Caco-2 (cell line): ENCODE measurements at regions of chr5 and their contacts with region 1.

Region 1: GRCh38 chr5:2751592-2752021 is at the start of gene IRX2:
- DNase-seq: peak; percentile 94 to 95
- H3K4me3 ChIP-seq: peak within 1 kb of the TSS; percentile 96
- H3K4me3 Mint-ChIP-seq: peak within 1 kb of the TSS; percentile 85
- H3K27ac Mint-ChIP-seq: peak within 1 kb of the TSS; percentile 89
- H3K4me1 ChIP-seq: peaks cover 16% of the 10 kb centered on the region; the same call in 1 of the 2 replicates
- H3K4me1 Mint-ChIP-seq: peaks cover 24% of the 10 kb centered on the region
- H3K27me3 ChIP-seq: no peaks in the 10 kb centered on the region
- H3K27me3 Mint-ChIP-seq: no peaks in the 10 kb centered on the region
- CTCF ChIP-seq: no peak
- total RNA-seq, gene IRX2: 43.6 and 44.1 TPM in 2 replicates

Region 2: DNA sequence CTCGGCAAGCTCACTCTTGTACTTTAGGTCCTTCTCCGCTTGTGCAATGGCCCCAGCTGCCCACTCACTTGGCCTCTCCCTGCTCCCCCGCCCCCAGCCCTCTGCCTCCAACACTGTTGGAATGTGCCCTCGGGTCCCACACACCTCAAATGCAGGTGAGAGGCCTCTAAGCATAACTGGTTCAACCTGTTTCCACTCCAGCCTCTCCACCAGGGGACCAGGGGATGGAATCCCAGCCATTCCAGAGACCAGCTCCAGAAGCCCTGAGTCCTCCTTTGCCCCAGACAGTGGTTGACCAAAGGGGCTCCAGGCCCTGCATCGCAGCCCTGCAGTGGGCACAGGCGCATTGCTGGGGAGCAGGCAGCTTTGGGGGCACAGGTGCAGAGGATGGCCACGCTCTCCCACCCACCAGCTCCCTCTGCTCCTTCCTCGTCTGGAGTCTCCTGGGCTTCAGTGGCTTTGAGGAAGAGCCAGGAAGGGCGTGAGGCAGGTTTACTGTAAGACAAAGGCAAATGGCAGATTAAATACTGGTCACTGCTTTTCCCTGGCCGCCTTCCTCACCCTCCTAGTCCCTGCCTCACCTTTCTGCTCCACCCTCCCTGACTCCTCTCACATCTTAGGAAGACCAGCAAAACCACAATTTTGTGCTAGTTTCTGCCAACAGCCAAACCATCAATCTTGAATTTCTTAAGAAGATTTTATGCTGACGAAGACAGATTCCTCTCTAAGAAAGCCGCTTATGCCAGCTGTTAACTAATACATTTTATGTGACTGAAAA is 29.0 kb after region 1 on chr5:
- CTCF ChIA-PET with region 1: no interaction called
- POLR2A ChIA-PET with region 1: no interaction called
- intact Hi-C with region 1: loop called (anchors 1 kb)
- DNase-seq: peak; percentile 90 to 96
- H3K4me3 ChIP-seq: no peak overlapping the region
- H3K4me3 Mint-ChIP-seq: peak overlapping the region; percentile 26
- H3K27ac Mint-ChIP-seq: peak overlapping the region; percentile 69
- H3K4me1 ChIP-seq: peaks cover 21% of the 10 kb centered on the region
- H3K4me1 Mint-ChIP-seq: peaks cover 26% of the 10 kb centered on the region
- H3K27me3 ChIP-seq: no peaks in the 10 kb centered on the region
- H3K27me3 Mint-ChIP-seq: no peaks in the 10 kb centered on the region
- CTCF ChIP-seq: no peak

Region 3: DNA sequence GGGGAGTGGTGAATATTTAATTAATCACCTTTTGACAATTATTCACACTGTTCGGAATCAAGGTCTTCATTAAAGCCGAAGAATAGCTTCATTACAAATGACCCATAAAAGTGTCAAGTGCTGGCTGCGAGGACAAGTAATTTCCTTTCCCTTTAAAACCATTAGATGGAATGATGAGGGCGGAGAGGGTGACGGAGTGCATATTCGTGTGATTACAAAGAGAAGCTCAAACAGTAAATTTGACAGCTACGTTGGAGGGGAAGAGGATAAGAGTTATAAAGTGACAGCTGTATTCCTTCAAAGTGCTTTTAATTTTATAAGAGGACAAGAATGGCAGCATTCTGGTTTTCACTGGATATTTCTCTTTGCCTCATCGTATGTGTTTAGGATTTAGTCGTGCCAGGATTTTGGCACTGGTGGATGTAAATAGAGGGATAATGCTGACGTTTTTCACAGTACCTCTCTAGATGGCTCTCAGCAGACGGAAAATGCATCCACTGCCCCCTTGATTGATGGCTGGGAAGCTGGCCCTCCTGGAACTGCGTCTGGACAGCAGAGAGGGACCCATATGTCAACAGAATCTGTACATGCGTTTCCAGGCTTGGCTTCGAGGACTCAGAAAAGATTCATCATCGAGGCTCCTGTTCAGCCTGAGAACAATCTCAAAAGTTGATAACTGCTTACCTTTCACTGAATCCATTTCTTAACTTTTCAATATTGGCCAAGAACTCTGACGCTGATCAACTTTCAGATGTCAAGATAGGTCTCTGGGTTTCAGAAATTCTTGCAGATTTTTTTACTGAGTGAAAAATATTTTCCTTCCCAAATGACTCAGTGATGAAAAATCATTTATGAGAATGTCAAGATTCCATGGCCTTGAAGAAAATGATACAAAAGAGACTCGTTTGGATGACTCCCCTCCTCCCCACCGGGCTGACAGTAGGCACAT is 50.2 kb after region 1 on chr5:
- CTCF ChIA-PET with region 1: interaction called, 3 read pairs
- POLR2A ChIA-PET with region 1: interaction called, 3 read pairs
- intact Hi-C with region 1: loop called (anchors 1 kb)
- DNase-seq: no peak
- H3K4me3 ChIP-seq: no peak overlapping the region
- H3K4me3 Mint-ChIP-seq: peak overlapping the region; percentile 39
- H3K27ac Mint-ChIP-seq: peak overlapping the region; percentile 24
- H3K4me1 ChIP-seq: peaks cover 27% of the 10 kb centered on the region
- H3K4me1 Mint-ChIP-seq: peaks cover 15% of the 10 kb centered on the region
- H3K27me3 ChIP-seq: no peaks in the 10 kb centered on the region
- H3K27me3 Mint-ChIP-seq: no peaks in the 10 kb centered on the region
- CTCF ChIP-seq: no peak

Region 4: DNA sequence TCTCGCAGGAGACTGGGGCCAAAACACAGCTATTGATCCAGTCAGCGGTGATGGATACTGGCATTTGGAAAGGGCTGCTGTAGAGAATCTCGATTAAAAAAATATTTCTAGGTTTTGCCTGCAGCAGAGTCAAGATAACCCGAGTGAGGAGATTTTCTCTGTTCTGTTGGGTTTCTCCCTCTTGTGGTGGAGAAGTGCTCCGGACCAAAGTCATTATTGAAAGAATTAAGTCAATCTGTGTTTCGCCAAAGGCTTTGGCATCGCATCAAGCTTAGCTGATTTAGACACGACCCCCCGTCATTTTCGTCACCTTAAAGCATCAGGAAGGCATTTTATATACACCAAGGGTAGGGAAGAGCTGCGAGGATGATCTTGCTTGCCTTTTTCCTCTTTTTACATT is 97.0 kb after region 1 on chr5:
- CTCF ChIA-PET with region 1: no interaction called
- POLR2A ChIA-PET with region 1: no interaction called
- intact Hi-C with region 1: loop called (anchors 2 kb)
- DNase-seq: peak in 1 of 2 experiments; percentile 14
- H3K4me3 ChIP-seq: no peak overlapping the region
- H3K4me3 Mint-ChIP-seq: no peak overlapping the region
- H3K27ac Mint-ChIP-seq: no peak overlapping the region
- H3K4me1 ChIP-seq: no peaks in the 10 kb centered on the region
- H3K4me1 Mint-ChIP-seq: peaks cover 6% of the 10 kb centered on the region
- H3K27me3 ChIP-seq: no peaks in the 10 kb centered on the region
- H3K27me3 Mint-ChIP-seq: peaks cover 3% of the 10 kb centered on the region
- CTCF ChIP-seq: peak; percentile 32 to 58

Region 5: DNA sequence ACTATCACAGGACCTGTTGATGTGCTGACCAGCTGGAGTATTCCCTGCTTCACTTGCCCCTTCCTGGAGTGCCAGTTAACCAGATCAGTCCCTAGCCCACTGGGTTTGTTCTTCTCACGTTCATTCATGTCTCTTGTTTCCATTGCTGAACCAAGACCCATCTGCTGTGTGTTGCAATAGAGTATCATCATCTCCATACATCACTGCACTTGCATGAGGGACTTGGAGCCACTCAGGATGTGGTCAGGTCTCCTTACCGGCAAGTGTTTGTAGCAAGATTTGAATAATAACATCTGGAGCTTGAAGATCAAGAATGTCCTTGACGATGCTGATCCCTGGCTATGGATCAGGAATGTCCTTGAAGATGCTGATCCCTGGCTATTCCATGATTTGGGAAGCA is 1202.6 kb after region 1 on chr5:
- CTCF ChIA-PET with region 1: no interaction called
- POLR2A ChIA-PET with region 1: no interaction called
- intact Hi-C with region 1: no loop called
- DNase-seq: no peak
- H3K4me3 ChIP-seq: no peak overlapping the region
- H3K4me3 Mint-ChIP-seq: no peak overlapping the region
- H3K27ac Mint-ChIP-seq: no peak overlapping the region
- H3K4me1 ChIP-seq: no peaks in the 10 kb centered on the region
- H3K4me1 Mint-ChIP-seq: no peaks in the 10 kb centered on the region
- H3K27me3 ChIP-seq: no peaks in the 10 kb centered on the region
- H3K27me3 Mint-ChIP-seq: no peaks in the 10 kb centered on the region
- CTCF ChIP-seq: no peak